H1 (cell line): ENCODE measurements at regions of chr13 and their contacts with region 1.

Region 1: GRCh38 chr13:50893211-50893852 is 16.3 kb upstream of the RNASEH2B start:
- DNase-seq: no peak
- H3K4me3 ChIP-seq: peak overlapping the region in 1 of 4 experiments; percentile 14; a peak in 1 of 8 replicates
- H3K27ac ChIP-seq: no peak overlapping the region
- H3K4me1 ChIP-seq: peaks cover 0 to 11% (median 5%) of the 10 kb centered on the region in 4 experiments; a peak in 4 of 7 replicates
- H3K27me3 ChIP-seq: no peaks in the 10 kb centered on the region
- CTCF ChIP-seq: no peak
- EP300 ChIP-seq: no peak
- POLR2A ChIP-seq: no peak
- RAD21 ChIP-seq: no peak

Region 2: GRCh38 chr13:50911937-50912795 is 18.8 kb after region 1 on chr13:
- CTCF ChIA-PET with region 1: interaction called, 8 read pairs
- POLR2A ChIA-PET with region 1: interaction called, 13 read pairs
- DNase-seq: peak; percentile 79 to 95
- H3K4me3 ChIP-seq: peak overlapping the region in 1 of 4 experiments; percentile 69; a peak in 1 of 8 replicates
- H3K27ac ChIP-seq: no peak overlapping the region
- H3K4me1 ChIP-seq: peaks cover 10 to 21% (median 15%) of the 10 kb centered on the region in 4 experiments; a peak in 6 of 7 replicates
- H3K27me3 ChIP-seq: no peaks in the 10 kb centered on the region
- CTCF ChIP-seq: peak; percentile 69 to 90 (median 88)
- EP300 ChIP-seq: peak in 1 of 2 experiments; percentile 97; a peak in 1 of 3 replicates
- POLR2A ChIP-seq: no peak
- RAD21 ChIP-seq: peak; percentile 96 to 98